CD4-positive, alpha-beta T cell (primary cell): ENCODE measurements at regions of chr2 and their contacts with region 1.

Region 1: GRCh38 chr2:136107051-136108033 is 10.6 kb downstream of the CXCR4 start:
- DNase-seq: no peak
- ATAC-seq: no peak
- H3K4me3 ChIP-seq: no peak overlapping the region
- H3K4me3 Mint-ChIP-seq: no peak overlapping the region
- H3K27ac ChIP-seq: no peak overlapping the region
- H3K27ac Mint-ChIP-seq: no peak overlapping the region
- H3K4me1 ChIP-seq: peaks cover 2% of the 10 kb centered on the region
- H3K4me1 Mint-ChIP-seq: peaks cover 3% of the 10 kb centered on the region
- H3K27me3 ChIP-seq: no peaks in the 10 kb centered on the region
- H3K27me3 Mint-ChIP-seq: no peaks in the 10 kb centered on the region
- CTCF ChIP-seq: no peak

Region 2: DNA sequence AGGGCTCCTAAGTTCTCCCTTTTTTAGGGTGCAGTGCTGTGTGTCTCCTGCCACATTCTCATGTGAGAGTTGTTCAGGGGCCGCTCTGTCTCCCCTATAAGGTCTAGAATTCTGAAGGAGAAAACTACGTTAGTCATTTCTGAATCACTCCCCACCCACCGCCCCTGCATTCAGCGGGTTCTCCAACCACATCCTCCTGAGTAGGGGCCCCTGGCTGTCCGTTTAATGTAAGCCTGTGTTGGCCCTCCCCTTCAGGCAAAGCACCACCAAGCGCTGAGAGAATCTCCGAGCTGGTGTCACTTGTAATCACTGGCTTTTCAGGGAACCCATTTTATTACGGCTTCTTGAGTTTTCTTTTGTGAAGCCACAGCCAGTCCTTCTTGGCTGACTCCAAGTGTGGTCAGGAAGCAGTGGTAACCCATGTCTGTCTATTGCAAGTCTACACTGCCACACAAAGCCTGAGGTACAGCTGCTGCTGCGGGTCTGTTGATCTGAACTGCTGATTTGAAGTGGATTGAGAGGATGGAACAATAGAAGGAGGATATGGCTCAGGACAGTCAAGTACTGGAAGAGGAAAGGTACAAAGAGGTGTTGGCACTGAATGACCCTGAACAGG is 287.2 kb before region 1 on chr2:
- CTCF ChIA-PET with region 1: no interaction called
- POLR2A ChIA-PET with region 1: no interaction called
- intact Hi-C with region 1: no loop called
- DNase-seq: peak in 13 of 14 experiments; percentile 5 to 65 (median 34)
- ATAC-seq: peak; percentile 92
- H3K4me3 ChIP-seq: peak overlapping the region; percentile 16
- H3K4me3 Mint-ChIP-seq: peak overlapping the region; percentile 56
- H3K27ac ChIP-seq: no peak overlapping the region
- H3K27ac Mint-ChIP-seq: peak overlapping the region; percentile 45
- H3K4me1 ChIP-seq: peaks cover 20% of the 10 kb centered on the region
- H3K4me1 Mint-ChIP-seq: peaks cover 16% of the 10 kb centered on the region
- H3K27me3 ChIP-seq: no peaks in the 10 kb centered on the region
- H3K27me3 Mint-ChIP-seq: no peaks in the 10 kb centered on the region
- CTCF ChIP-seq: no peak

Region 3: GRCh38 chr2:136059036-136059472 is 48.3 kb before region 1 on chr2:
- CTCF ChIA-PET with region 1: no interaction called
- POLR2A ChIA-PET with region 1: no interaction called
- intact Hi-C with region 1: loop called in 1 of 2 experiments (anchors 10 kb)
- DNase-seq: no peak
- ATAC-seq: no peak
- H3K4me3 ChIP-seq: no peak overlapping the region
- H3K4me3 Mint-ChIP-seq: no peak overlapping the region
- H3K27ac ChIP-seq: no peak overlapping the region
- H3K27ac Mint-ChIP-seq: no peak overlapping the region
- H3K4me1 ChIP-seq: peaks cover 42% of the 10 kb centered on the region
- H3K4me1 Mint-ChIP-seq: peaks cover 61% of the 10 kb centered on the region
- H3K27me3 ChIP-seq: no peaks in the 10 kb centered on the region
- H3K27me3 Mint-ChIP-seq: no peaks in the 10 kb centered on the region
- CTCF ChIP-seq: no peak

Region 4: DNA sequence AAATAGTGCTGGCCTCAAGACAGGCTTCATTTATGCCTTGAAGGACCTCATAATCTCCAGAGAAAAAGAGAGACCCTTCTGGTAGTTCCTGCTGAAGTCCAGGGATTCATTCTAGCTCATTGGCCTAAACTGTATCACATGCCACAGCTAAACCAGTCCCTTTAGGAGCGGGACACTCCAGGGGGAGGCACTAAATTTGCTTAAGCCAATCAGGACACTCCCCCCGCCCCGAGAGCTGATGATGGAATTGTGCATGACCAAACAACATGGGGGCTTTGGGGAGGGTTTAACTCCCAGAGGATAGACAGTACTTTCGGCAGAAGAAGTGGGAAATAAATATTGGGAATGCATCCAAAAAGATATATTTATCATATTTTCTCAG is 47.1 kb after region 1 on chr2:
- CTCF ChIA-PET with region 1: no interaction called
- POLR2A ChIA-PET with region 1: no interaction called
- intact Hi-C with region 1: no loop called
- DNase-seq: no peak
- ATAC-seq: no peak
- H3K4me3 ChIP-seq: no peak overlapping the region
- H3K4me3 Mint-ChIP-seq: no peak overlapping the region
- H3K27ac ChIP-seq: no peak overlapping the region
- H3K27ac Mint-ChIP-seq: no peak overlapping the region
- H3K4me1 ChIP-seq: no peaks in the 10 kb centered on the region
- H3K4me1 Mint-ChIP-seq: peaks cover 23% of the 10 kb centered on the region
- H3K27me3 ChIP-seq: no peaks in the 10 kb centered on the region
- H3K27me3 Mint-ChIP-seq: no peaks in the 10 kb centered on the region
- CTCF ChIP-seq: no peak

Region 5: DNA sequence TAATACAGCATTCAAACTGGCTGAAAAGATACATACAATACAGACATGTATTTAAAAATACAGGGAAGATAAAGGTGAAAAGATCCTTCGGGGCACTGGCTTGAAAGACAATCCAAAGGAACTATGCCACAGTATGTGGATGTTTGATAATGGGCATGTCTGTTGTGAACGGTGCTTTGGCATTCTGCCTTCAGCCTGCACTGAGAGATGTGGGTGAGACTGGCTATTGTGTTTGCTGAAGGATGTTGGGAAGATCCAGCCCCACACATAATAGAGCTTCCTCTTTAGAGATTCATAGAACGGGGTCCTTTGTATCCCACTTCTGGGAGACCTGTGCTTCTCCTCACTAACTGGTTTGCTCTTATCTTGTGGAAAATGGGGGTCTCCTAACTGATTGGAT is 75.8 kb after region 1 on chr2:
- CTCF ChIA-PET with region 1: no interaction called
- POLR2A ChIA-PET with region 1: no interaction called
- intact Hi-C with region 1: no loop called
- DNase-seq: no peak
- ATAC-seq: no peak
- H3K4me3 ChIP-seq: no peak overlapping the region
- H3K4me3 Mint-ChIP-seq: no peak overlapping the region
- H3K27ac ChIP-seq: no peak overlapping the region
- H3K27ac Mint-ChIP-seq: no peak overlapping the region
- H3K4me1 ChIP-seq: peaks cover 9% of the 10 kb centered on the region
- H3K4me1 Mint-ChIP-seq: peaks cover 7% of the 10 kb centered on the region
- H3K27me3 ChIP-seq: no peaks in the 10 kb centered on the region
- H3K27me3 Mint-ChIP-seq: no peaks in the 10 kb centered on the region
- CTCF ChIP-seq: no peak